ENCODE measurements at regions of chr7 and their contacts with region 1.

Region 1: DNA sequence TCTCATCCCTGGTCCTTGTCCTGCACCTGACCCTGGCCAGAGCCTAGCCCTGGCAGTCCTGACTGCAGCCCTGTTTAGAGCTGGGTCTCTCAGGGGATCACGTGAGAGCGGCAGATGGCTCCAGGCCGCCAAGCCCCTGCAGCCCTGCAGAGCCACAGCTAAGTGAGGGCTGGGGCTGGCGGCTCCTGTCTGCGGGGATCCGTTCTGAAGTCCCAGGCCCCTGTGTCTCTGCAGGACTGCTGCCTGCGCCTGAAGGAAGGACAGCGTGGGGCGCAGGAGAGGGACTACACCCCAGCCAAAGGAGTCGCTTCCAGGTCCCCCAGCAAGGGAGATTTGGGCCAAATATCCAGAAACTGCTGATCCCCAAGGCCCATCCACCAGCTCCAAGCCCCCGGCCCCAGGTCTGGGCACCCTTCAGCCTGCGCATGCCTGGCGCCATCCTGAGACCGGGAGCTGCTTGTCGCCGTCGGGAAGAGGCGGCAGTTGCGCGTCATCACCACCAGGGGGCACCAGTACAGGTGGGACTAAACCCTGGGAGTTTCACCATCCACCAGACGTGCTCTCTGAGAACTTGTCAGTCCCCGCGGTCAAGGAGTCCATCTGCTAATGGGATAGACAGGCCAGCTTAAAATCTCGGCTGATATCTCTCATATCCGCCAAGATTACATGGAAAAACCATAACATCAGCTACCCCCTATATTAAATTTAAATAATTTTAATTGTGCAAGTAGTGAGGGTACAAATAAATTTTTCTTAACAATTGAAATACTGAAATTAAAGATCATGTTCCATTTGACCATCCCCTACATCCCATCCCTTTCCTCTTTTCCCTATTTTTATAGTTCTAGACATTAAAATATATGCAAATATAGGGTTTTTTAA is 25.1 kb upstream of the GHRHR start:
- DNase-seq: peak; percentile 82
- H3K4me3 ChIP-seq: peak overlapping the region; percentile 44
- H3K27ac ChIP-seq: no peak overlapping the region
- H3K4me1 ChIP-seq: peaks cover 34% of the 10 kb centered on the region
- H3K27me3 ChIP-seq: no peaks in the 10 kb centered on the region
- CTCF ChIP-seq: peak; percentile 99

Region 2: GRCh38 chr7:30814700-30815387 is 123.8 kb before region 1 on chr7:
- intact Hi-C with region 1: loop called (anchors 10 kb)
- DNase-seq: peak; percentile 50
- H3K4me3 ChIP-seq: no peak overlapping the region
- H3K27ac ChIP-seq: peak overlapping the region; percentile 88
- H3K4me1 ChIP-seq: peaks cover 53% of the 10 kb centered on the region
- H3K27me3 ChIP-seq: no peaks in the 10 kb centered on the region
- CTCF ChIP-seq: no peak

Region 3: DNA sequence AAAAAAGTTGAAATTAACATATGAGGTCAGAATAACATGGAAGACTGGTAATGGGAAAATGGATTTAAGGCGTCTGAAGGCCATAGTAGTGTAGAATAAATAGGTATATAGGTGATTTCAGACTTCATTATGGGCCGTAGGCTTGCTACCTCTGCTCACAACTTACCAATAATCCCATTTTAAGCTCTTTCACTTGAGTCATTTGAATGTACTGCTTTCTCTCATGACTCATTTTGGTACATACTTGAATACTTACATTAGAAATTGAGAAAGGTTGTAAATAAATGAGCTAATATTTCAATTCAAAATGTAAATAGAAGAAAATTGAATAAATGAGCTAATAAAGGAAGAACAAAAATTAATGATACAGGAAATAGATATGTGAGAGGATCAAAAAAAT is 444.0 kb after region 1 on chr7:
- intact Hi-C with region 1: no loop called
- DNase-seq: no peak
- H3K4me3 ChIP-seq: no peak overlapping the region
- H3K27ac ChIP-seq: no peak overlapping the region
- H3K4me1 ChIP-seq: no peaks in the 10 kb centered on the region
- H3K27me3 ChIP-seq: peaks cover 13% of the 10 kb centered on the region
- CTCF ChIP-seq: no peak

Measured in left ventricle myocardium inferior (tissue), 1 donor.